WTC11 (cell line): ENCODE measurements at regions of chr1 and their contacts with region 1.

Region 1: DNA sequence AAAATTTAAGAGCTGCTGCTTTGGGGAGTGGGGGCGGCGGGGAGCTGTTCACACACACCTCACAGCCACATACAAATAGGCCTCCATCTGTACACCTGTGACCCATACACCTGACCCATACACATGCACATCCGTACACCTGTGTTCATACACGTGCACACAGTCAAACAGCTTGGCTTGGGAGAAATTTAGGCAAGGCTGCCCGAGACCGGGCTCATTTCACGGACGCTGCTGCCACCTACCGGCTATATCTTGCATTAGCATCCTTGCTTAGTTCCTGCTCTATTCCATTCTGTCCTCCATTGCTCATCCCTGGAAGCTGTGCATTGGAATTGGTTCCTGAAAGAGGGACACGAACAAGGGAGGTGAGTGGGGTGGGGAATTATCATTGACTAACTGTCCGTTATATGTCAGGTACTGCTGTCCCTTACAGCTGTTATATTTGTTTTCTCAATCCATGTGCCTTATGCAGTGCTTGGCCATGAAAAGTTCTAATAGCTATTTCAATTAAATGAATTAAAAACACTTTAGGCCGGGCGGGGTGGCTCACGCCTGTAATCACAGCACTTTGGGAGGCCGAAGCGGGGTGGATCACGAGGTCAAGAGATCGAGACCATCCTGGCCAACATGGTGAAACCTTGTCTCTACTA is 37.1 kb upstream of the EPB41 start:
- DNase-seq: peak; percentile 83
- ATAC-seq: peak; percentile 63
- H3K4me3 Mint-ChIP-seq: no peak overlapping the region
- H3K27ac Mint-ChIP-seq: no peak overlapping the region
- H3K4me1 Mint-ChIP-seq: peaks cover 6% of the 10 kb centered on the region
- H3K27me3 Mint-ChIP-seq: no peaks in the 10 kb centered on the region
- CTCF ChIP-seq: peak; percentile 93

Region 2: GRCh38 chr1:28631713-28632112 is 245.5 kb before region 1 on chr1:
- CTCF ChIA-PET with region 1: no interaction called
- POLR2A ChIA-PET with region 1: no interaction called
- DNase-seq: no peak
- ATAC-seq: no peak
- H3K4me3 Mint-ChIP-seq: no peak overlapping the region
- H3K27ac Mint-ChIP-seq: no peak overlapping the region
- H3K4me1 Mint-ChIP-seq: no peaks in the 10 kb centered on the region
- H3K27me3 Mint-ChIP-seq: no peaks in the 10 kb centered on the region
- CTCF ChIP-seq: no peak

Region 3: GRCh38 chr1:28642847-28643635 is 234.2 kb before region 1 on chr1 and contains the start of gene TAF12:
- CTCF ChIA-PET with region 1: interaction called, 19 read pairs
- POLR2A ChIA-PET with region 1: interaction called, 5 read pairs
- DNase-seq: peak; percentile 91
- ATAC-seq: peak; percentile 88
- H3K4me3 Mint-ChIP-seq: peak within 1 kb of the TSS; percentile 99
- H3K27ac Mint-ChIP-seq: peak within 1 kb of the TSS; percentile 99
- H3K4me1 Mint-ChIP-seq: peaks cover 23% of the 10 kb centered on the region
- H3K27me3 Mint-ChIP-seq: no peaks in the 10 kb centered on the region
- CTCF ChIP-seq: peak; percentile 31; the same call in 1 of the 2 replicates
- total RNA-seq, gene TAF12: 18.6 to 23.3 TPM (median 22.1 TPM) in 3 replicates

Region 4: GRCh38 chr1:28756846-28757245 is 120.4 kb before region 1 on chr1:
- CTCF ChIA-PET with region 1: interaction called, 10 read pairs
- POLR2A ChIA-PET with region 1: no interaction called
- DNase-seq: no peak
- ATAC-seq: peak; percentile 67
- H3K4me3 Mint-ChIP-seq: no peak overlapping the region
- H3K27ac Mint-ChIP-seq: peak overlapping the region; percentile 58; the same call in 1 of the 2 replicates
- H3K4me1 Mint-ChIP-seq: peaks cover 14% of the 10 kb centered on the region
- H3K27me3 Mint-ChIP-seq: no peaks in the 10 kb centered on the region
- CTCF ChIP-seq: no peak

Region 5: DNA sequence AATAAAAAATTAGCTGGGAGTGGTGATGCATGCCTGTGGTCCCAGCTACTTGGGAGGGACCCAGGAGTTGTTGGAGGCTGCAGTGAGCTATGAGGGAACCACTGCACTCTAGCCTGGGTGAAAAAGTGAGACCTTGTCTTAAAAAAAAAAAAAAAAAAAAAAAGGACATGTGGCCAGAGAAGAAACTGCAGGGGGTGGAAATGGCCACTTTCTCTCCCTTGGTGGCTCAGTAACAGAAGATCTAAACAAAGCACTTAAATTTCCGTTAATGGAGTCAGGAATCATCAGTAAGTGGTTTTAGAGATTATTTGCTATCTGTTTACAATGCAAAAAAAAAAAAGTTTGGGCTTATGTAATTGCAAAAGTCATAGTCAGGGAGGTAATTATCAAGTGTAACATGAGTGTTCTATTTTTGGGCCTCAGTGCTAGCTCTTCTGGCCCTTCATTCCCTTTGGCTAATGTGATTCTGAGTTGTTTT is 84.6 kb before region 1 on chr1:
- CTCF ChIA-PET with region 1: interaction called, 179 read pairs
- POLR2A ChIA-PET with region 1: no interaction called
- DNase-seq: no peak
- ATAC-seq: no peak
- H3K4me3 Mint-ChIP-seq: no peak overlapping the region
- H3K27ac Mint-ChIP-seq: no peak overlapping the region
- H3K4me1 Mint-ChIP-seq: peaks cover 19% of the 10 kb centered on the region
- H3K27me3 Mint-ChIP-seq: no peaks in the 10 kb centered on the region; the same call in 1 of the 2 replicates
- CTCF ChIP-seq: no peak

Region 6: GRCh38 chr1:28835237-28835650 is 42.0 kb before region 1 on chr1:
- CTCF ChIA-PET with region 1: interaction called, 18 read pairs
- POLR2A ChIA-PET with region 1: no interaction called
- DNase-seq: no peak
- ATAC-seq: no peak
- H3K4me3 Mint-ChIP-seq: no peak overlapping the region
- H3K27ac Mint-ChIP-seq: peak overlapping the region; percentile 33; the same call in 1 of the 2 replicates
- H3K4me1 Mint-ChIP-seq: no peaks in the 10 kb centered on the region
- H3K27me3 Mint-ChIP-seq: no peaks in the 10 kb centered on the region
- CTCF ChIP-seq: no peak

Region 7: DNA sequence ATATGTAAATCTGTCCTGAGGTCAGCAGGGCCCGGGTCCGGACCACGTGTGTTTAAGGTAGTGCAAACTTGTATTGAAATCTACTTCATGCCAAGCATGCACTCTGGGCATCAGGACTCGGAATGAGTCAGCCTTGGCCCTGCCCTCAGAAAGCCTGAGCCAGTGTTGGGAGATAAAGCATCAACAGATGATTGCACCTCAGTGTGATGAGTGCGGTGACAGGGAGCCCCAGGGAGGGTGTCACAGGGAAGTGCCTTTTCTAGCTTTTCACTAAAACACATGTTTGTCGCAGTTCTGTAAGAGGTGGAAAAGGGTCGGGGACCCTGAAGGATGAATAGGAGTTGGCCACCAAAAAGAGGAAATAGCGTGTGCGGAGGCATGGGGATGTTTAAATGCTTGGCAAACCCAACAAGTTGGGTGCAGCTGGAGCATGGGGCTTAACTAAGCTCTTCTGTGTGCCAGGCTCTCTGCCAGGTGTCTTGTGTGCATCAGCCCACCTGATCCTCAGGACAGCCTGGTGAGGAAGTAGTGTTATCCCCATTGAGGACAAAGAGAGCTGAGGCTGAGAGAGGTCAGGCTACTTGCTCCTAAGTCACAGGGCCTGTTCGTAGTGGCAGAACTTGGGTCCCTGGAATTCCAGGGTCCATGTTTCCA is 11.1 kb before region 1 on chr1:
- CTCF ChIA-PET with region 1: interaction called, 22 read pairs
- POLR2A ChIA-PET with region 1: interaction called, 4 read pairs
- DNase-seq: no peak
- ATAC-seq: no peak
- H3K4me3 Mint-ChIP-seq: no peak overlapping the region
- H3K27ac Mint-ChIP-seq: no peak overlapping the region
- H3K4me1 Mint-ChIP-seq: 0 out of 2 replicates have a peak, but pooled peaks cover 3% of the 10 kb centered on the region
- H3K27me3 Mint-ChIP-seq: no peaks in the 10 kb centered on the region
- CTCF ChIP-seq: no peak

Region 8: DNA sequence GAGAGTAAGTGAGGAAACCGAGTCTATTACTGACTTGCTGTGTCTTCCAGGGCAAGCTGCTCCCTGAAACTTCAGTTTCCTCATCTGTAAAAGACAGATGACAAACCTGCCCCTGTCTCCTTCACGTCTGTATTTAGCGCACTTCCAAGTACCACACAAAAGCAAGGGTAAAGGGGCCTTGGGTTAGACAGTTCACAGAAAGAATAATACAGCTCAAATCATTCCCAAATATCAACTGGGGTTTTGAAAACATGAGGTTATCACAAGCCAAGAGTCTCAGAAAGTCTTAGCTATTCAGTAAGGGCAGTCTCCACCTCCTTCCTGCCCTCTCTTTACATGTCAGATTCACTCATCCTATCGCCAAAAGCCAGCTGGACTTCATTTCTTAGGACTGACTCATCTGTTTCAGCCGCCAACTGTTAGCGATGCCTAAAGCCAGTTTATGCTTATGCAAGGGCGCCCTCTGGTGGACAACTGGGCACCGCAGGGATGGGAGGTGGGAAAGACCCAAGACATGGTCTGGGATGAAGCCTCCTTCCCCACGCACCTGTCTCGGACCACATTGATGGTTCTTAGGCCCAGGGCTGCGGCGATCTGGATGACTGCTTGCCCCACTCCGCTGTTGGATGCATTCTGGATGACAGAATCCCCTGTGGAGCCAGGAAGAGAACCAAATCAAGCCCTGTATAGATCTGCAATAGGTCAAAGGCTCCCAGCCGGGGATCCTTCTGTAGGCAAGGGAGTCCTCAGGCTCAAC is 325.5 kb after region 1 on chr1:
- CTCF ChIA-PET with region 1: interaction called, 57 read pairs
- POLR2A ChIA-PET with region 1: interaction called, 4 read pairs
- DNase-seq: peak; percentile 99
- ATAC-seq: peak; percentile 96
- H3K4me3 Mint-ChIP-seq: no peak overlapping the region
- H3K27ac Mint-ChIP-seq: peak overlapping the region; percentile 68; the same call in 1 of the 2 replicates
- H3K4me1 Mint-ChIP-seq: peaks cover 8% of the 10 kb centered on the region
- H3K27me3 Mint-ChIP-seq: no peaks in the 10 kb centered on the region
- CTCF ChIP-seq: peak; percentile 95

Region 9: DNA sequence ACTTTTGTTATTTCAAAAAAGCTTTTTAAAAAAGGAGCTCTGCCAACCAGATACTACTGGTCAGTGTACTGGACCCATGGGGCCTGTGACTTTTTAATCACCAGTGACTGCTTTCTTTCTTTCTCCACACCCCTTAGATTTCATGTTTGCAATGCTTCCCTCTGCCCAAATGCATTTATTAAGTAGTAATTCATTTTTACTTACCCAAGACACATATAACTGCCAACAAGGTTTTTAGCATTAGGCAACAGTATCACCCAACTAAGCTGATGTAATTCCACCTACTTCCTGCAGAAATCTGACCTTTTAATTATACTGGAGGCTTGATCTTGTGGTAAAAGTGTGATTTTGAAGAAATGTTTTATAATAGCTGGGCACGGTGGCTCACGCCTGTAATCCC is 341.0 kb after region 1 on chr1:
- CTCF ChIA-PET with region 1: no interaction called
- POLR2A ChIA-PET with region 1: no interaction called
- DNase-seq: no peak
- ATAC-seq: no peak
- H3K4me3 Mint-ChIP-seq: no peak overlapping the region
- H3K27ac Mint-ChIP-seq: no peak overlapping the region
- H3K4me1 Mint-ChIP-seq: peaks cover 24% of the 10 kb centered on the region
- H3K27me3 Mint-ChIP-seq: no peaks in the 10 kb centered on the region
- CTCF ChIP-seq: no peak

Region 10: GRCh38 chr1:29315298-29315697 is 438.0 kb after region 1 on chr1:
- CTCF ChIA-PET with region 1: no interaction called
- POLR2A ChIA-PET with region 1: no interaction called
- DNase-seq: no peak
- ATAC-seq: no peak
- H3K4me3 Mint-ChIP-seq: no peak overlapping the region
- H3K27ac Mint-ChIP-seq: peak overlapping the region; percentile 74; the same call in 1 of the 2 replicates
- H3K4me1 Mint-ChIP-seq: no peaks in the 10 kb centered on the region
- H3K27me3 Mint-ChIP-seq: no peaks in the 10 kb centered on the region; the same call in 1 of the 2 replicates
- CTCF ChIP-seq: no peak